ENCODE measurements at regions of chr11 and their contacts with region 1.

Region 1: DNA sequence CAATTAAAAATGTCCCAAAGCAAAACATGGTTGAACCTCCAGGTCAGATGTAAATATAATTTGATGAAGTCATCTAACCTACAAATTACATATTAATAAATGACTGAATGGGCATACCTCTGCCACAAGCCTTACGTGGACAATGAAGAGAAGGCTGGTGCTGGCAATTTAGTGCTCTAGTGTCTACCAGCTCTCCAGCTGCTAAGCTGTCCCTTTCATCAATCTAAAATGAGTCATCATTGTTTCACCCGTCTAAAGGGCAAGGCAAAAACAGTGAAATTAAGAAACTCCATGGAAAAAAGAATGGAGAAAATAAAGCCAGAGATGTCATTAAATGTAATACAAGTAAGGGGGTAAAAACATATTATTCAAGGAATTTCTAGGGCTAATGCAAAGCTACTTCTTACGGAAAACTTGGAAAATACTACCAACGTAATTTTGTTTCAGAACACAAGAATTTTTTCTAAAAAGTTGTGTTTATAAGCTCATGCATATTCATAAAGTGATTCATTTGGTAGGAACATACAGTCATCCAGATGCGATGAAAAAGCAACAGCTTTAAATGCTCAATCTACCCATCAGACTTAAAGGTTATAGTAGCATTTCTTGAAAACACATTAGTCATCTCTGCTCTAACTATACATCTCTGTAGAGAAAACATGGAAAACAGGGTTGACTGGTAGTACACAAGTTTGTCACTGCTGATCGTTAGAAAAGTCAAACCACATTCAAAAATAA is 71.5 kb downstream of the SIK3 start:
- DNase-seq: no peak
- H3K4me3 Mint-ChIP-seq: no peak overlapping the region
- H3K27ac Mint-ChIP-seq: peak overlapping the region; percentile 47
- H3K4me1 Mint-ChIP-seq: peaks cover 60% of the 10 kb centered on the region
- H3K27me3 Mint-ChIP-seq: no peaks in the 10 kb centered on the region

Region 2: DNA sequence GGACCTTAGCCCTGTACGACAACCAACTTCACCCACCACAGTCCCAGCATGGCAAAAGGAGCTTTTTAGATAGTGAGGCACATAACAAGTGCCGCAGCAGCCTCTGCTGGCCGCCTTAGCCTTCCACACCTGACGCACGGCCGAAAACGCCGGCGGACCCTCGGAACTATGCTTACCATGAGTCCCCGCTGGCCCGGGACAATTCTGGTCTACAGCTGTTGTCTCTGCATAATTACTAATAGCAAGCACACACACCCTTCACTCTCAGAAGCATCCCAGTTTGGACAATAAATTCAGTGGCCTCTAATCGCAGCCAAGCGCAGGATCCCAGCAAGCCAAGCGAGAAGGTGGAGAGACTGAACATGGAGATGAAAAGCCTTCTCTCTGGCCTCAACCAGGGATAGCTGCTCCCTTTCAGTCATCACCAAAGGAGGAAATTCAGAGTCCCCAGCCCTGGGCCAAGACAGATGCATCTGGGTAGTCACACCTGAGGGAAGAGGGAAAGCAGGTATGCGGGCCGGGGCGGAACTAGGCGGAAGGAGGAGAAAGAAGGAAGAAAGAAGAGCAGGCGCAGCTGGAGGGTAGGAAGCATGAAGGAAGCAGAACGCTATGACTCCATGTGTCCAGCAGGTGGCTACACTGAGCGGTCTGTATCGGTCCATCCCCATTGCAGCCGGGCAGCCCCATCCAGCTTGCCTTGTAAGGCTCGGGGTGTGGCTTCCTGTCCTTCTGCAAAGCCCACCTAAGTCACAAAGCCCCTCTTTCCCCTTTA is 294.3 kb before region 1 on chr11:
- CTCF ChIA-PET with region 1: no interaction called
- POLR2A ChIA-PET with region 1: no interaction called
- DNase-seq: peak; percentile 67
- H3K4me3 Mint-ChIP-seq: no peak overlapping the region
- H3K27ac Mint-ChIP-seq: no peak overlapping the region
- H3K4me1 Mint-ChIP-seq: peaks cover 6% of the 10 kb centered on the region
- H3K27me3 Mint-ChIP-seq: no peaks in the 10 kb centered on the region

Region 3: GRCh38 chr11:117010808-117011540 is 15.8 kb before region 1 on chr11:
- CTCF ChIA-PET with region 1: interaction called, 4 read pairs
- POLR2A ChIA-PET with region 1: interaction called, 18 read pairs
- DNase-seq: no peak
- H3K4me3 Mint-ChIP-seq: no peak overlapping the region
- H3K27ac Mint-ChIP-seq: peak overlapping the region; percentile 63
- H3K4me1 Mint-ChIP-seq: peaks cover 34% of the 10 kb centered on the region
- H3K27me3 Mint-ChIP-seq: no peaks in the 10 kb centered on the region